ENCODE measurements at regions of chr1 and their contacts with region 1.

Region 1: DNA sequence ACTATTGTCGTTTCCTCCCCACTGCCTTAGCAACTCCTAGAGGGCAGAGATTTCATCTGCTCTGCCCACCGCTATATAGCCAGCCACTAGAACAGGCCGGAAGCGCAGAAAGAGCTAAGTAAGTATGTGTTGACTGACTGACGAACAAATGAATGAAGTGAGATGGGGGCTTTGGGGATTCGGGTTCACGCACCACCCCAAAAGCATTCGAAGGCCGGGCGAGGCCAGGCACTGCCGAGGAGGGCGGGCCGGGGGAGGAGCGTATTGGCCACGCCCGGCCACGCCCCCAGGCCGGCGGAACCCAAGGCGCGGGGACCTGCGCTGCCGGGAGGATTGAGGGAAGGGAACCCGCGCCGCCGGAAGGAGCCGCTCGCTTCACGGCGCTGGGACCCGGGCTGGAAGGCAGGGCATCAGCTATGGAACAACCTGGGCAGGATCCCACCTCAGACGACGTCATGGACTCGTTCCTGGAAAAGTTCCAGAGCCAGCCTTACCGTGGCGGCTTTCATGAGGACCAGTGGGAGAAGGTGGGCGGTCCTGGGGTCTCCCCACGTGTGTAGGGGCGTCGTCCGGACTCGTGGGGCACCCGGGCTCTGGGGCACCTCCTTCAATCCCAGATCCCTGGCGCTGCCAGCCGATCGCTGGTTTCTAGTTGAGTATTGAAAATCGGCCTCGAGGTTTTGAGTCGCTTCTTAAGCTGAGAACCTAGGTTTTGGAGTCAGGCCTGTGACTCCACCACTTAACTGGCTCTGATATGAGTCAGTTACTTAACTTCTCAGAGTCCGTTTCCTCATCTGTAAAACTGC is at the start of gene TTC4:
- DNase-seq: peak; percentile 59 to 72
- ATAC-seq: peak; percentile 92 to 95
- H3K4me3 ChIP-seq: peak within 1 kb of the TSS; percentile 91 to 98 (median 97)
- H3K27ac ChIP-seq: peak within 1 kb of the TSS; percentile 88 to 94 (median 90)
- H3K4me1 ChIP-seq: peaks cover 12 to 15% of the 10 kb centered on the region in 2 donors
- H3K27me3 ChIP-seq: no peaks in the 10 kb centered on the region
- CTCF ChIP-seq: no peak
- POLR2A ChIP-seq: peak; percentile 77 to 79
- total RNA-seq, gene TTC4: 26.7 to 44.3 (median 31.4) TPM

Region 2: DNA sequence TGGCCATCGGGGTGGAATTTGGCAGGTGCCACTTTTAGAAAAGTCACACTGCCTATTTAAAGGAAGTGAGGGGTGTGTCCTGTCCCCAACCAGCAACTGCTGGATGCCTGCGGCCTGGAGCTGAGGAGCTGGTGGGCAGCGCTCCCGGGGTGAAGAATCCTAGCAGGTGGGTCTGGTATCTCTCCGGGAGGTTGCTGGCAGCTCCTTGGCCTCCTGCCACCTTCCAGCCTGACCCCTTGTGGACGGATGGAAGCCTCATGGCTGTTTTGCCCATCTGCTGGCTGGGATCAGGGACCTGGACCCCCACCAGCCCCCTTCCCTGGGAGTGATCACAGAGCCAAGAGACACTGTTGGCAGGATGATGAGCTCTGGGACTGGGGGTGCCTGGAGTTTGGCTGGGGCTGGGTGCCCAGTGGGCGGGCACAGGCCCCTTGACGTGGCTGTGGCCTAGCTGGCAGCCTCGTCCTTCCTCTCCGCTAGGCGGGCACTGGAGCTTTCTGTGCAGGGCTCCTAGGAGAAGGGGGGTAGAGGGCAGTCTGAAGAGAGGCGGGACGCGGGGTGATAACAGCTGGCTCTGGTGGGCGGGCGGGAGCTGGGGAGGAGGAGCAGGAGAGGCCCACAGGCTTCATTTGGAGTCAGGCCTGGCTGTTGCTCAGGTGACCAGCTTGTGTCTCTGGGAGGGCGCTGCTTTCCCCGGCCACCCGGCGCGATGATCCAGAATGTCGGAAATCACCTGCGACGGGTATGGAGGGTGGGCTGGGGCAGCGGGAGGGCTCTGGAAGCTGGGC is 167.9 kb before region 1 on chr1 and contains the start of gene ACOT11:
- in situ Hi-C with region 1: no loop called
- intact Hi-C with region 1: loop called (anchors 5 kb)
- DNase-seq: peak; percentile 87 to 96
- ATAC-seq: peak; percentile 74 to 83
- H3K4me3 ChIP-seq: peak within 1 kb of the TSS; percentile 27 to 51 (median 30)
- H3K27ac ChIP-seq: peak within 1 kb of the TSS; percentile 84 to 98 (median 92)
- H3K4me1 ChIP-seq: peaks cover 32 to 34% of the 10 kb centered on the region in 2 donors
- H3K27me3 ChIP-seq: no peaks in the 10 kb centered on the region
- CTCF ChIP-seq: peak; percentile 54 to 81 (median 73)
- POLR2A ChIP-seq: peak; percentile 80 to 81
- total RNA-seq, gene ACOT11: 0.90 to 3.2 (median 1.2) TPM

Region 3: DNA sequence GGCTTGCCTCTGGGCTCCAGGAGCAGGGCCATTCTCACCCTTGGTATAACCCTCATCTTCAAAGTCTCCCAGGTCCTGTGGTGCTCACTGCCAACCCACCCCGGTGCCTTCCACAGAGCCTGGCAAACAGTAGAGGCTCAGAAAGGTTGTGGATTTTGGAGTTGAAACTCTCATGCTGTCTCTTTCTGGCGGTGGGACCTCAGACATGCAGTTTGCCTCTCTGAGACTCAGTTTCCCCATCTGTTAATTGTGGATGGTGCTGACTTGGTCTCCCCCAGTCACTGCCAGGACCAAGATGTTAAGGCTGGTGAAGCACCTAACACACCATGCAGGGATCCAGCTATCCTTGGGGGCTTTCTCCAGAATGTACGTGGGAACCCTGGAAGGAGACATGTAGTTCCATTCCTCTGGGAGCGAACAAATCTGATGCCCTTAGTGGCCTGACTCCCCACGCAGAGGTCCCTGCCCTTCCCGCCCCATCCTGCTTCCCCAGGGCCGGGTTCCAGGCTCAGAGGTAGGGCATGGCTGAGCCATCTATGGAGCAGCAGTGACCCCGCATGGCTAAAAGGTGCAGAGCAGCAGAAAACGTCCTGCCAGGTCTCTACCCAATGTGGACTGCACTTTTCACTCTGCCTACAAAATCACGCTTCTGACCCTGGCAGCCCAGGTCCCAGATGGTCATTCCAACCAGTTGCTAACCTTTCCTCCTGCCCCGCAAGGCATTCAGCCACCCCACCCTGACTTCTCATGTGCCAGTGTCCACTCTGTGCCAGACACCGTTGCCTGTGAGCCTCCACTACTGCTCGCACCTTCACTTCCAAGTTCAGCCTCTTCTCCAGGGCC is 94.6 kb after region 1 on chr1:
- in situ Hi-C with region 1: no loop called
- intact Hi-C with region 1: no loop called
- DNase-seq: no peak
- ATAC-seq: peak; percentile 79 to 81
- H3K4me3 ChIP-seq: no peak overlapping the region
- H3K27ac ChIP-seq: no peak overlapping the region
- H3K4me1 ChIP-seq: no peaks in the 10 kb centered on the region
- H3K27me3 ChIP-seq: no peaks in the 10 kb centered on the region
- CTCF ChIP-seq: peak; percentile 59 to 80 (median 73)
- POLR2A ChIP-seq: no peak

Measured in gastrocnemius medialis (tissue), 4 donors.